OCI-LY7 (cell line): ENCODE measurements at regions of chr20 and their contacts with region 1.

Region 1: GRCh38 chr20:2387180-2387577 is 6.5 kb downstream of the TGM6 start:
- DNase-seq: peak; percentile 66
- H3K4me3 ChIP-seq: peak overlapping the region; percentile 34
- H3K27ac ChIP-seq: no peak overlapping the region
- H3K4me1 ChIP-seq: no peaks in the 10 kb centered on the region
- CTCF ChIP-seq: peak; percentile 85

Region 2: DNA sequence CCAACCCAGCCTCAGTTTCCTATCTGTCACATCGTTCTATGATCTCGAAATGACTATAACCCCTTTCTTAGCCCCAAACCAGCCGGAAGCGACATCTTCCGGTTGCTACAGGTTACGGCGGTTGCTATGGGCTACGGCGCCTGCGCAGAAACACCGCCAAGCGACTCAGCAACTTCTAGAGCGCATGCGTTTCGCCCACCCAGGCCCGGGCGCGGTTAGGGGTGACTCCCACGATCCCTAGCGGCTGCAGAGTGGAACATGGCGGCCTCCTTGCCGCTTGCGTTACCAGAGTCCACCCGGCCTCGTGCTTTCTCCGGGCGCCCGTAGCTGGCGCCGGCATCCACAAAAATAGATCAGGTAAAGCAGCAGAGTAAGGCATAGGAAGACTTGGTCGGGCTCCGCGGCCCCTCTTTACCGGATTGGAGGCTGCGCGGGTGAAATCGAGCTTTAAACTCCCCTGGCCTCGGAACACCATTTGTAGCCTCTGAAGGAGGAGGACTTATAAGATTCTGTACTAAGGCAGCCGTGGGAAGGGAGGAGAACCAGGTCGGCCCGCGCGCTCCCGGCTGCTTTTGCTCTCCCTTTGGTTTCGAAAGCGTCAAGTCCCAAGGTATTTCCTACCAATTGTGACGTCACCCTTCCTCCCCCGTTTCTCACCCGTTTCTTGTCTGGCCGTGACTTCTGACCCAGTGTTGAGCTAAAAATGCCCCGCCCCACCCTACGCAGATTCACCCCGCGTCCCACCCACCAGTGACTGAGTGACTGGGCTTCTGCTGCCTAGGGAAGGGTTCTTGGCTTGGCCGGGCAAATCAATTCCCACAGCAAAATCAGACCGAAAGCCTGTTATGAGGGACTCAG is 1061.8 kb before region 1 on chr20:
- CTCF ChIA-PET with region 1: no interaction called
- POLR2A ChIA-PET with region 1: no interaction called
- intact Hi-C with region 1: no loop called
- DNase-seq: peak; percentile 98
- H3K4me3 ChIP-seq: peak overlapping the region; percentile 82
- H3K27ac ChIP-seq: peak overlapping the region; percentile 60
- H3K4me1 ChIP-seq: peaks cover 46% of the 10 kb centered on the region
- CTCF ChIP-seq: no peak

Region 3: DNA sequence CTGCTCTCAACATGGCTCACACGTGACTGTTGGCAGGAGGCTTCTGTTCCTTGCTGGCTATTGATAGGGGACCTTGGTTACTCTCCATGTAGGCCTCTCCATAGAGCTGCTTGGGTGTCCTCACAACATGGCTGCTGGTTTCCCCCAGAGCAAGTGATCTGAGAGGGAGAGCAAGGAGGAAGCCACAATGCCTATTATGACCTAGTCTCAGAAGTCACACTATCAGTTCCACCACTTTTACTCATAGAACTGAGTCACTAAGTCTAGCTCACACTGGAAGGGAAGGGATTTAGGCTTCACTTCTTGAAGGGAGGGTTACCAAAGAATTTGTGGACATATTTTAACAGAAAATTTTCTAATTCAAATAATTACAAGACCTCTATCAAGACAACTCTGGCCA is 256.5 kb after region 1 on chr20:
- CTCF ChIA-PET with region 1: no interaction called
- POLR2A ChIA-PET with region 1: no interaction called
- intact Hi-C with region 1: loop called (anchors 10 kb)
- DNase-seq: no peak
- H3K4me3 ChIP-seq: no peak overlapping the region
- H3K27ac ChIP-seq: no peak overlapping the region
- H3K4me1 ChIP-seq: no peaks in the 10 kb centered on the region
- CTCF ChIP-seq: no peak